ENCODE measurements at regions of chr2 and their contacts with region 1.

Region 1: DNA sequence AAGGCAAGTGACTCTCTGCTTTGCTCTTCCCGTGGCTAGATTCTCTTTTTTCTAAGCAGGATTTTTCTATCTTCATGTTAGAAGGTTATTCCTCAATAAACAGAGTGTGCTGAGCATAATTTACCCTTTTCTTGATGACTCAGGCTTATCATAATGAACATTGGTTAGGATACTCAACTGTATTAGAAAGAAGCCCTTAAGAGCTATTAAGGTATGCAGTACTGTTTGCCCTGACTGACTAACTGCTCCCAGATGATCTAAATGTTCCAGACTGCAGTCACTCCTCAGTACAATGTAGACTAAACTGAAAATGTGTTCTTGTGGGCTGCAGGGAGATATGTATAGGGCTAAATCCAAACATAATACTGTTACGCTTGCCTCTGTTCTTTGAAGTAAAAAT is 687.8 kb downstream of the NUP35 start:
- DNase-seq: no peak
- H3K4me3 ChIP-seq: no peak overlapping the region
- H3K27ac ChIP-seq: no peak overlapping the region
- H3K4me1 ChIP-seq: no peaks in the 10 kb centered on the region
- CTCF ChIP-seq: no peak

Region 2: DNA sequence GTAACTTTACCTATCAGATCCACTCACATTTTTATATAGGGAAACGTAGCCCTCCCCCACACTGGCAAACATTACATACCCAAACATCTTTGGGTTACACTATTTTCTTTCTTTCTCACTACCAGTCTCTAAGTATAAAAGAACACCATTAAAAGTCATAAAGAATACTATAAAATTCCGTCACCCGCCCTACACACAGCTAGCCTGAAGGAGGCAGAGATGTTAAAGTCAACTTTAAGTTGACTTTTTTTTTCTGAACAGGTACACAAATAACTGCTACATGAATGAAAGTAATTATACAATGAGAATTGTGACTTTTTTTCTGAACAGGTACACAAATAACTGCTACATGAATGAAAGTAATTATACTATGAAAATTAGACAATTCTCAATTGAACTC is 59.5 kb before region 1 on chr2:
- CTCF ChIA-PET with region 1: no interaction called
- POLR2A ChIA-PET with region 1: no interaction called
- intact Hi-C with region 1: no loop called
- DNase-seq: no peak
- H3K4me3 ChIP-seq: no peak overlapping the region
- H3K27ac ChIP-seq: no peak overlapping the region
- H3K4me1 ChIP-seq: no peaks in the 10 kb centered on the region
- CTCF ChIP-seq: 0 out of 2 replicates have a peak, but pooled peaks have one; percentile 20

Region 3: GRCh38 chr2:183798535-183798934 is 13.6 kb before region 1 on chr2:
- CTCF ChIA-PET with region 1: no interaction called
- POLR2A ChIA-PET with region 1: no interaction called
- intact Hi-C with region 1: no loop called
- DNase-seq: no peak
- H3K4me3 ChIP-seq: no peak overlapping the region
- H3K27ac ChIP-seq: no peak overlapping the region
- H3K4me1 ChIP-seq: no peaks in the 10 kb centered on the region
- CTCF ChIP-seq: no peak

Region 4: GRCh38 chr2:183825710-183826109 is 13.6 kb after region 1 on chr2:
- CTCF ChIA-PET with region 1: no interaction called
- POLR2A ChIA-PET with region 1: no interaction called
- intact Hi-C with region 1: loop called (anchors 1 kb)
- DNase-seq: no peak
- H3K4me3 ChIP-seq: no peak overlapping the region
- H3K27ac ChIP-seq: no peak overlapping the region
- H3K4me1 ChIP-seq: no peaks in the 10 kb centered on the region
- CTCF ChIP-seq: no peak